ENCODE measurements at regions of chr19 and their contacts with region 1.

Region 1: DNA sequence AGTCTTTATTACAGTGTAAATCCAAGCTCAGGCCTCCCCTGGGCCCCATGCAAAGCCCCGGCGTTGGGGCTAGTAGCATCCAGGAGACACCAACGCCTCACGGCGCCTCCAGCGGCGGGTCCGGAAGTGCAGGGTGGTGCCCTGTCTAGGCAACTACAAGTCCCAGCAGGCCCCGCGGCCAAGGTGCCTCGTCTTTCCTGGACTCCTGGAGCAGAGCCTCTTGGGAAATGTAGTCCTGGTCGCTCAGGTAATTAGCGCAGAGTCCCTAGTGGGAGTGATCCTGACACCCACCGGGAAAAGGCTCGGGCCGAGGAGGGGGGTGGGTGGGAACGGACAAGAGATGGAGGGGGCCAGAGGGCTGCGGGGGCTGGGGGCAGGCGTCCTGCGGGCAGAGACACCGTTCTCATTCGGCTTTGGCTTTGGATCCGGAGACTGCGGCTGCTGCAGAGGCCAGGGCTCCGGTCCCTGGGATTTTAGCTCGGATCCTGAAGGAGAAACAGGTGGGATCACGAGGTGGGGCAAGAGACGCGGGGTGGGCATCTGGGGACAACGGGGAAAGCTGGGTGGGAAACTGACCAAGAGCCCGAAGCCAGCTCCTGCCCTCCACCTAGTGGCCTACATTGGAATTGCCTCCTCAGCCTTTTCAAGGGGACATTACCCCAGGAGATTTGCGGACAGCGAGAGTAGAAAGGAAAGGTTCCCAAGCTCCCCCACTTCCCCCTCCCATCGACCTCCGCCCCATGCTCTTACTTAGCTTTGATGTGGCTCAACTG is 11.4 kb downstream of the RTN2 start:
- DNase-seq: peak; percentile 95 to 99 (median 96)
- ATAC-seq: peak; percentile 99
- H3K4me3 ChIP-seq: peak overlapping the region; percentile 62 to 77
- H3K4me3 Mint-ChIP-seq: peak overlapping the region; percentile 92
- H3K27ac ChIP-seq: peak overlapping the region in 1 of 2 experiments; percentile 14
- H3K27ac Mint-ChIP-seq: peak overlapping the region; percentile 77
- H3K4me1 ChIP-seq: peaks cover 4% of the 10 kb centered on the region
- H3K4me1 Mint-ChIP-seq: peaks cover 7% of the 10 kb centered on the region
- H3K27me3 ChIP-seq: no peaks in the 10 kb centered on the region
- H3K27me3 Mint-ChIP-seq: no peaks in the 10 kb centered on the region
- CTCF ChIP-seq: peak; percentile 87

Region 2: GRCh38 chr19:43498233-43498842 is 1987.2 kb before region 1 on chr19:
- CTCF ChIA-PET with region 1: no interaction called
- POLR2A ChIA-PET with region 1: no interaction called
- intact Hi-C with region 1: no loop called
- DNase-seq: no peak
- ATAC-seq: no peak
- H3K4me3 ChIP-seq: no peak overlapping the region
- H3K4me3 Mint-ChIP-seq: no peak overlapping the region
- H3K27ac ChIP-seq: no peak overlapping the region
- H3K27ac Mint-ChIP-seq: peak overlapping the region; percentile 75
- H3K4me1 ChIP-seq: peaks cover 10% of the 10 kb centered on the region
- H3K4me1 Mint-ChIP-seq: peaks cover 24% of the 10 kb centered on the region
- H3K27me3 ChIP-seq: no peaks in the 10 kb centered on the region
- H3K27me3 Mint-ChIP-seq: no peaks in the 10 kb centered on the region
- CTCF ChIP-seq: no peak

Region 3: GRCh38 chr19:45423589-45424190 is 61.8 kb before region 1 on chr19 and contains the start of gene ERCC1:
- CTCF ChIA-PET with region 1: interaction called, 16 read pairs
- POLR2A ChIA-PET with region 1: no interaction called
- intact Hi-C with region 1: loop called (anchors 1 kb)
- DNase-seq: peak in 6 of 9 experiments; percentile 35 to 84 (median 48)
- ATAC-seq: peak; percentile 57
- H3K4me3 ChIP-seq: peak within 1 kb of the TSS; percentile 72 to 95
- H3K4me3 Mint-ChIP-seq: peak within 1 kb of the TSS; percentile 93
- H3K27ac ChIP-seq: peak within 1 kb of the TSS; percentile 48 to 88
- H3K27ac Mint-ChIP-seq: peak within 1 kb of the TSS; percentile 90
- H3K4me1 ChIP-seq: peaks cover 32% of the 10 kb centered on the region
- H3K4me1 Mint-ChIP-seq: peaks cover 55% of the 10 kb centered on the region
- H3K27me3 ChIP-seq: no peaks in the 10 kb centered on the region
- H3K27me3 Mint-ChIP-seq: peaks cover 2% of the 10 kb centered on the region
- CTCF ChIP-seq: no peak
- total RNA-seq, gene ERCC1: 28.7 to 31.5 TPM

Region 4: DNA sequence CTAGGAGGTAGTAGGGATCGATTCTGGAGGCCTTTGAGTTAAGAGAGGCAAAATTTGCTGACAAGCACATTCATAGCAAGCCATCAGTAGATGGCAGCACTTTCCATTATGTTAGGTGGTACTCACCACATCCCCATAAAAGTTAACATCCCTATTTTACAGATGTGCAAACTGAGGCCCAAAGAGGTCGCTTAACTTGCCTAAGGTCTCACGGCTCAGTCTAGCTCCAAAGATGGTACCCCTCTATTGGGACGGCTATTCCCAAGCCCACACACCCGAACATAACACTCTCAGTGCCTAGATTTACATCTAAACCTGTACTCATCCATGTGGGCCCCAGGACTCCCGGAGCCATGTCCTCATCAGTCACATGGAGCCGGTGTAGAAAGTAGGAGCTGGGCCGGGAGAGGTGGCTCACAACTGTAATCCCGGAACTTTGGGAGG is 39.1 kb before region 1 on chr19:
- CTCF ChIA-PET with region 1: interaction called, 317 read pairs
- POLR2A ChIA-PET with region 1: no interaction called
- intact Hi-C with region 1: no loop called
- DNase-seq: peak in 3 of 9 experiments; percentile 22 to 76 (median 65)
- ATAC-seq: no peak
- H3K4me3 ChIP-seq: no peak overlapping the region
- H3K4me3 Mint-ChIP-seq: peak overlapping the region; percentile 35
- H3K27ac ChIP-seq: peak overlapping the region in 1 of 2 experiments; percentile 41
- H3K27ac Mint-ChIP-seq: no peak overlapping the region
- H3K4me1 ChIP-seq: peaks cover 45% of the 10 kb centered on the region
- H3K4me1 Mint-ChIP-seq: peaks cover 56% of the 10 kb centered on the region
- H3K27me3 ChIP-seq: no peaks in the 10 kb centered on the region
- H3K27me3 Mint-ChIP-seq: no peaks in the 10 kb centered on the region
- CTCF ChIP-seq: peak; percentile 20

Region 5: DNA sequence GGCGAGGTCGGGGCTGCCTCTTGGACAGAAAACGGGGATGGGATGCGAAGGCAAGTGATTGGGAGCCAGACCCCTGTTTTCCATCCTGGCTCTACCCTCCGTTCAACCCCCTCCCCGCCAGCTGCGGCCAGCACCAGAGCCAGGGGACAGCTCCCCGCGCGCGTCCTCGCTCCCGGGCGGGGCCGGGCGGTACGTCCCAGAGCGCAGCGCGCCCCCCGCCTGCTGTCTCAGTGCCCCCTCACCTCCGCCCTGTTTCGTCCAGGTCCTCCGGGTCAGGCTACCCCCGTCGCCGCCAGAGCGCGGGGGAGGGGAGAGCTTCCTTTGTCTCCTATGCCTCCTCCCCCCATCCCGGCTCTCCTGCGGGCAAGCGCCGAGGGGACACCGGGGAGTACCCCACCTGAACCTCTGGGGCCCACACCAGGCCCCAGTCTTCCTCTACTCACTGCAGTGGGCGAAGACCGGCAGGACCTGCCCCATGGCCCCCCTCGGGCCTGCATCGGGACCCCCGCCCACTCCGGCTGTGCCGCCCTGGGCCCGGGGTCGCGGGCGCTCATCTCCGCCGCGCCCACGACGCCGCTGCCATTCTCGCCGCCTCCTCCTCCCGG is 11.0 kb after region 1 on chr19:
- CTCF ChIA-PET with region 1: interaction called, 34 read pairs
- POLR2A ChIA-PET with region 1: interaction called, 5 read pairs
- intact Hi-C with region 1: no loop called
- DNase-seq: peak in 6 of 9 experiments; percentile 37 to 68 (median 58)
- ATAC-seq: peak; percentile 16
- H3K4me3 ChIP-seq: peak overlapping the region; percentile 57 to 75
- H3K4me3 Mint-ChIP-seq: peak overlapping the region; percentile 74
- H3K27ac ChIP-seq: no peak overlapping the region
- H3K27ac Mint-ChIP-seq: no peak overlapping the region
- H3K4me1 ChIP-seq: peaks cover 45% of the 10 kb centered on the region
- H3K4me1 Mint-ChIP-seq: peaks cover 37% of the 10 kb centered on the region
- H3K27me3 ChIP-seq: peaks cover 0 to 4% of the 10 kb centered on the region in 2 experiments
- H3K27me3 Mint-ChIP-seq: peaks cover 21% of the 10 kb centered on the region
- CTCF ChIP-seq: no peak

Region 6: GRCh38 chr19:45817010-45817724 is 331.7 kb after region 1 on chr19:
- CTCF ChIA-PET with region 1: no interaction called
- POLR2A ChIA-PET with region 1: no interaction called
- intact Hi-C with region 1: loop called in 1 of 2 experiments (anchors 5 kb)
- DNase-seq: peak; percentile 93 to 99 (median 95)
- ATAC-seq: peak; percentile 100
- H3K4me3 ChIP-seq: no peak overlapping the region
- H3K4me3 Mint-ChIP-seq: peak overlapping the region; percentile 18
- H3K27ac ChIP-seq: no peak overlapping the region
- H3K27ac Mint-ChIP-seq: no peak overlapping the region
- H3K4me1 ChIP-seq: peaks cover 16% of the 10 kb centered on the region
- H3K4me1 Mint-ChIP-seq: peaks cover 7% of the 10 kb centered on the region
- H3K27me3 ChIP-seq: peaks cover 0 to 5% of the 10 kb centered on the region in 2 experiments
- H3K27me3 Mint-ChIP-seq: peaks cover 8% of the 10 kb centered on the region
- CTCF ChIP-seq: peak; percentile 99